ENCODE measurements at regions of chr5 and their contacts with region 1.

Region 1: DNA sequence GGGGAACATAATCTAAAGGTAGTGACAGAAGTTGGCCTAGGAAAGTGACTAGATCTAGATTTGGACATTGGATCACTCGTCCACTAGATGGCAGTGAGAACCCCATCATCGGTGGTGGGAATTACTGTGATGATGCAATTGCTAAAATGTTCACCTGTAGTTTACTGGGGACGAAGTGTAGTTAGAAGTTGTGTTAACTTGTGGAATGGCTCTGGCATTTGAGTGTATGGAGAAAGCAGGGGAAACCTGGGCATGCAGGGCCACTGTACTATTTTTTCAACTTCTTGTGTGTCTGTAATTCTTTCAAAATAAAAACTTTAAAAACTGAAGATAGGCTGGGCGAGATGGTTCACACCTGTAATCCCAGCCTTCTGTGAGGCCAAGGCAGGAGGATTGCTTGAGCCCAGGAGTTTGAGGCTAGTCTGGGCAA is 75.5 kb downstream of the PHAX start:
- DNase-seq: peak; percentile 76
- H3K4me3 ChIP-seq: no peak overlapping the region
- H3K27ac ChIP-seq: no peak overlapping the region
- H3K4me1 ChIP-seq: peaks cover 9 to 11% of the 10 kb centered on the region in 2 experiments; a peak in 2 of 4 replicates
- H3K27me3 ChIP-seq: no peaks in the 10 kb centered on the region
- CTCF ChIP-seq: peak; percentile 84
- EP300 ChIP-seq: no peak
- RAD21 ChIP-seq: peak; percentile 92

Region 2: DNA sequence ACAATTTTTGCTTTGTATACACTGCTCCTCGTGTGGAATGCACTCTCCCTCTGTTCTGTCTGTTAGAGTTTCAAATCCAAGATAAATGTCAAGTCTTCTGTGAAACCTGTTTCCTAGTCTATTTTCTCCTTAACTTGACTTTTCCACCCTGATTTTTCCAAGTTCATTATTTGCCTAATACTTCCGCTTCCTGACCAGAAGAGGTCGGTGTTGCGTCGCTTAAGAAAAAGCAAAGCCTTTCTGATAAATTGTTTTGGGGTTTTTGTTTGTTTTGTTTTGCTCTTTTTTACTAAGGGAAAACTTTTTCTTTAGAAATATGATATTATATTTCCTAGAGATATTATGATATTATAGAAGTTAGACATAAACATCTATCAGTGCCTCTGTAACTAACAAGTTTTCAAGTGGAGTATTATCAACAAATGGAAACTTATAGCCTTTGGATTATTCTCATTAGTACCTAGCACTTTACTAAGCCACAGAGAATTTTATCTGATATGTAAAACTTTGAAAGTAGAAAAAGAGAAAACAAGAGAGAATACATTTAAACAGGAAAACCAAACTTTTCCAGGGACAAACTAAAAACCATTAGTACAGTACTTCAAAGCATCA is 19.7 kb before region 1 on chr5:
- CTCF ChIA-PET with region 1: interaction called, 28 read pairs
- POLR2A ChIA-PET with region 1: interaction called, 3 read pairs
- DNase-seq: peak; percentile 57
- H3K4me3 ChIP-seq: no peak overlapping the region; a peak in 1 of 4 replicates
- H3K27ac ChIP-seq: no peak overlapping the region
- H3K4me1 ChIP-seq: no peaks in the 10 kb centered on the region
- H3K27me3 ChIP-seq: no peaks in the 10 kb centered on the region
- CTCF ChIP-seq: peak; percentile 94
- EP300 ChIP-seq: no peak
- RAD21 ChIP-seq: peak; percentile 91

Region 3: GRCh38 chr5:126664586-126664985 is 11.6 kb before region 1 on chr5:
- CTCF ChIA-PET with region 1: interaction called, 28 read pairs
- POLR2A ChIA-PET with region 1: no interaction called
- DNase-seq: no peak
- H3K4me3 ChIP-seq: no peak overlapping the region
- H3K27ac ChIP-seq: no peak overlapping the region
- H3K4me1 ChIP-seq: no peaks in the 10 kb centered on the region
- H3K27me3 ChIP-seq: no peaks in the 10 kb centered on the region
- CTCF ChIP-seq: no peak
- EP300 ChIP-seq: no peak
- RAD21 ChIP-seq: no peak

Region 4: GRCh38 chr5:126776497-126777256 is 100.5 kb after region 1 on chr5 and contains the start of gene LMNB1:
- CTCF ChIA-PET with region 1: interaction called, 172 read pairs
- POLR2A ChIA-PET with region 1: interaction called, 34 read pairs
- DNase-seq: peak; percentile 95
- H3K4me3 ChIP-seq: peak within 1 kb of the TSS; percentile 80 to 83
- H3K27ac ChIP-seq: peak within 1 kb of the TSS; percentile 90 to 94
- H3K4me1 ChIP-seq: peaks cover 4% of the 10 kb centered on the region in 2 experiments; a peak in 3 of 4 replicates
- H3K27me3 ChIP-seq: no peaks in the 10 kb centered on the region
- CTCF ChIP-seq: no peak
- EP300 ChIP-seq: peak; percentile 11 to 84; a peak in 2 of 4 replicates
- RAD21 ChIP-seq: no peak
- polyA plus RNA-seq, gene LMNB1: 20.8 and 34.9 TPM in 2 replicates

Region 5: GRCh38 chr5:126801992-126802294 is 125.7 kb after region 1 on chr5:
- CTCF ChIA-PET with region 1: interaction called, 92 read pairs
- POLR2A ChIA-PET with region 1: interaction called, 9 read pairs
- DNase-seq: peak; percentile 24
- H3K4me3 ChIP-seq: no peak overlapping the region
- H3K27ac ChIP-seq: 0 out of 4 replicates have a peak overlapping the region, but pooled peaks of 1 of the 2 experiments have one; percentile 1
- H3K4me1 ChIP-seq: peaks cover 0 to 19% of the 10 kb centered on the region in 2 experiments; a peak in 1 of 4 replicates
- H3K27me3 ChIP-seq: no peaks in the 10 kb centered on the region
- CTCF ChIP-seq: peak; percentile 68
- EP300 ChIP-seq: no peak
- RAD21 ChIP-seq: peak; percentile 70

Region 6: GRCh38 chr5:126808521-126808988 is 132.3 kb after region 1 on chr5:
- CTCF ChIA-PET with region 1: interaction called, 92 read pairs
- POLR2A ChIA-PET with region 1: no interaction called
- DNase-seq: peak; percentile 53
- H3K4me3 ChIP-seq: no peak overlapping the region
- H3K27ac ChIP-seq: no peak overlapping the region
- H3K4me1 ChIP-seq: peaks cover 0 to 31% of the 10 kb centered on the region in 2 experiments; a peak in 3 of 4 replicates
- H3K27me3 ChIP-seq: no peaks in the 10 kb centered on the region
- CTCF ChIP-seq: peak; percentile 68
- EP300 ChIP-seq: no peak
- RAD21 ChIP-seq: peak; percentile 61